Mucosa of descending colon (tissue), 3 donors: ENCODE measurements at regions of chr16 and their contacts with region 1.

Region 1: GRCh38 chr16:79601931-79602627 is 1.5 kb upstream of the MAF start:
- DNase-seq: peak in 2 of 3 donors; percentile 72 to 92
- ATAC-seq: peak; percentile 22
- H3K4me3 ChIP-seq: peak overlapping the region; percentile 47
- H3K4me1 ChIP-seq: peaks cover 8% of the 10 kb centered on the region
- CTCF ChIP-seq: peak; percentile 67

Region 2: GRCh38 chr16:78503602-78504001 is 1098.5 kb before region 1 on chr16:
- intact Hi-C with region 1: loop called in 1 of 2 experiments (anchors 5 kb)
- DNase-seq: peak in 1 of 3 donors; percentile 83
- ATAC-seq: peak; percentile 60
- H3K4me3 ChIP-seq: no peak overlapping the region
- H3K4me1 ChIP-seq: no peaks in the 10 kb centered on the region
- CTCF ChIP-seq: peak; percentile 62

Region 3: DNA sequence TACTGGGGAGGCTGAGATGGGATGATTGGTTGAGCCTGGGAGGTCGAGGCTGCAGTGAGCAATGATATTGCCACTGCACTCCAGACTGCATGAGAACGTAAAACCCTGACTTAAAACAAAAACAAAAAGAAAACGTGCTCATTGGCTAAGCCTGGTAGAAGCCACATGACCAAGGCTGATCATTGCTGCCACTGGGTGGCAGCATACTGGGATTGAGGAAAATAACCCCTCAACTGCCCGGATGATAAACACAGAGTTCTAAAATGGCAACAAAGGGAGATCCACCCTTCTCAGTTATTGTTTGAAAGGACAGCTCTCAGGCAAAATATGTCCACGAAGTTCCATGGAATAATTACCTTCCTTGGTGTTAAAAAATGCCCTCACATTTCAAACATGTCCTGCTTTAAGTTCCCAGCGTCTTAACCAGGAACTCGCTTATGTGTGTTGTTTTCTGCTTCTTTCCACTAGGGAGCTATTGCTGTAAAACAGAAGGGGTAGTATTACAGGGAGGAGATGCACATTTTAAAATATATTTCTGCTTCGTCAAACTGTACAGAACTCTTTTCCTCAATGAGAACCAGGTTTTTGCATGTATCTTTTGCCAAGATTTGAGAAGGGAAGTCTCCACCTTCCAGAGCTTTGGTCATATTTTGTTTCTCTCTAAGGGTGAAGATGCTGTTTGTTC is 676.9 kb before region 1 on chr16:
- intact Hi-C with region 1: loop called in 1 of 2 experiments (anchors 5 kb)
- DNase-seq: peak in 2 of 3 donors; percentile 58 to 74
- ATAC-seq: peak; percentile 71
- H3K4me3 ChIP-seq: no peak overlapping the region
- H3K4me1 ChIP-seq: no peaks in the 10 kb centered on the region
- CTCF ChIP-seq: no peak